ENCODE measurements at regions of chr3 and their contacts with region 1.

Region 1: DNA sequence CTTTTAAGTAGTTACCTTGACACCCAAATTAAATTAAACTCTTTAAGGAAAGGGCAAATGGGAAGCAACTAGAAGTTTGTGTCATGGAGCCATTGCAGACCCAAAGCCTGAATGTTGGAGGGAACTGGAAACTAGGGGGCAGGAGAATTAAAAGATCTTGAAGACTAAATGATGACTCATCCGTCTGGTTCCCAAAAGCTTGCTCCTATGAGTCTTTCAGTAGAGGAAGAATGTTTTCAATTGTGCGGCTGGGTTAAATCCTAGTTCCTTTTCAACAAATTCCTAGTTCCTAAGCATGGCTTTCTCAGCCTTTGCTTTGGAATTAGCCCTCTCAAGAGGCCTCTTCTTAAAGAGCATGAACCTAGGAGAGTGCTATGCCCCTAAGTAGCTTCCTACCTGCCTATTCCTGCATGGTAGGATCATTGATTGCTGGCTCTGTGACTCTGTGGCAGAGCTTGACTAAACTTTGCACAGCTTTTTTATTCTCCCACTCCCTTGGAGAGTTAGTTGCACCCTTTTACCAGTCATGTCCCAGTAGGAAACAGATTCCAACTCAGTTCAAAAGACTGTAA is 17.7 kb downstream of the CLEC3B start:
- DNase-seq: peak; percentile 22

Region 2: DNA sequence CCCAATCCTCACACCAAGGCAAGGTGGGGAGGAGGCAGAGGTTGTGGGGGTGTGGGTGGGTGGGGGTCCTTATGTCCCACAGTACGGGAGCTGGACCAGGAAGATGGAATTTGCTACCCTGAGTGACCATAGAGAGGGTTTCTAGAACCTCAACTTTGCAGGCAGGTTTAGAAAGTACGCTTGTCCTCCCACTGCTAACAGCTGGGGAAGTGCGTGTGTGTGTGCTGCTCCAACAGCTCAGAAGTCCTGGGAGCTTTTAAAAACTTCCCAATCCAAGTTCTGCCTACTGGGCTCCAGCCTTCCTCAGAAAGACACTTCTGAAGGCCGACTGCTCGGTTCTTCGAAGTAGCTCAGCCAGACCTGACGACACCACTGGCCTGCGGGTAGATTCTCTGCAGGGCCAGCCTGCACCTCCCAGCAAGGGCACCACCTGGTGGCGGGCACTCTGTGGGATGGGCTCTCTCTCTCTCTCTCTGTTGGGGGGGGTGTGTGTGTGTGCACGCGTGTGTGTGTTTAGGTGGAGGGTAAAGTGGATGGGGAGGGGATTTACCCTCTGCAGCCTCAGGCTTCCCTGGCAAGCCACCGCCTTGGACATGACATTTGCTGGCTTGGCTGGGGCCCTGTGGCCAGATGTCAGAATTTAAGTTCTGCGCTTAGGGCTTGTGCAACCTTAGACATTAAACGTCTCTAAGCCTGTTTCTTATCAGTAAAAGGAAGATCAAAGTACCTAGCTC is 166.7 kb after region 1 on chr3:
- in situ Hi-C with region 1: loop called (anchors 10 kb)
- DNase-seq: peak; percentile 64

Region 3: DNA sequence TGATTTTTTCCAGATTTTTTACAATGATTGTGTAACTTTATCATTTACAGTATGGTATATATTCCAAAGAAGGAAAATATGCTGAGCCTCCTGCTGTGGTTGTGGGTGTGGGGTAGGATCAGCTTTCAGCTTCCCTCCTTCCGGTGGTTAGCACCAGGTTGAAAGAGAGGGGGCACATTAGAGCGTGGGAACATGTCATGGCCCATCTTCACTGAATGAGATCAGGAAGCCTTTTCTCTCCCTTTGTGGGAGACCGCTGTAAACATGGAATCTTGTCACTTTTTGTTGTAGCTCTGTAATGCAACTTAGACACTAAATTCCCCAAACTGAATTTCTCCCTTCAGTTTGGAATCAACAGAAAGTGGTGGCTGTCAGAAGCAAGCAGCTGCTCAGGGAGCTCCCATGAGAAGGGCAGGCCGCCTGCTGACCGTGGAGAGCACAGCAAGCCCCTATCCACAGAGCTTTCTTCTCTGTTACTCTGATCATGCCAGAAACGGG is 464.1 kb after region 1 on chr3:
- in situ Hi-C with region 1: loop called (anchors 10 kb)
- DNase-seq: peak; percentile 82